Heart right ventricle (tissue), 16 donors: ENCODE measurements at regions of chr7 and their contacts with region 1.

Region 1: DNA sequence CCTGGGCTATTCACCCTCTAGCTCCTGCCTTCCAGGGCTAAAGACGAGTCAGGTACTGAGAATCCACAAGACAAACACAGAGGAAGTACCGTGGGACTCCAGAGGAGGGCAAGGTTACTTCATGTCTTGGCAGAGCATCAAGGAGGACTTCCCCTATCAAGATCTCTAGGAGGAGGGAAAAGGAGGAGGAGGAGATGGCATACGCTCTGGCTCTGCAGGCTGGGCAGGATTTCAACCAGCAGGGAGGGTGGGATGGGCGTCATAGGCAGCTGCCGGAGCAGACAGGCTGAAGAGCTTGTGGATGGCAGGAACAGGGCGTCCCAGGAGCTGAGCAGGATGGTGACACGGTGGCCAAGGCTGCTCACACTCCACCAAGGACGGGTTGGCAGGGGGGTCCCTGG is 21.3 kb downstream of the MDH2 start:
- DNase-seq: peak; percentile 38 to 73
- ATAC-seq: peak; percentile 67 to 94 (median 80)
- H3K4me3 ChIP-seq: no peak overlapping the region
- H3K27ac ChIP-seq: peak overlapping the region in 5 of 10 donors; percentile 35 to 56 (median 43)
- H3K4me1 ChIP-seq: peaks cover 0 to 32% (median 15%) of the 10 kb centered on the region in 9 donors
- H3K27me3 ChIP-seq: no peaks in the 10 kb centered on the region
- CTCF ChIP-seq: peak in 1 of 9 donors; percentile 6

Region 2: DNA sequence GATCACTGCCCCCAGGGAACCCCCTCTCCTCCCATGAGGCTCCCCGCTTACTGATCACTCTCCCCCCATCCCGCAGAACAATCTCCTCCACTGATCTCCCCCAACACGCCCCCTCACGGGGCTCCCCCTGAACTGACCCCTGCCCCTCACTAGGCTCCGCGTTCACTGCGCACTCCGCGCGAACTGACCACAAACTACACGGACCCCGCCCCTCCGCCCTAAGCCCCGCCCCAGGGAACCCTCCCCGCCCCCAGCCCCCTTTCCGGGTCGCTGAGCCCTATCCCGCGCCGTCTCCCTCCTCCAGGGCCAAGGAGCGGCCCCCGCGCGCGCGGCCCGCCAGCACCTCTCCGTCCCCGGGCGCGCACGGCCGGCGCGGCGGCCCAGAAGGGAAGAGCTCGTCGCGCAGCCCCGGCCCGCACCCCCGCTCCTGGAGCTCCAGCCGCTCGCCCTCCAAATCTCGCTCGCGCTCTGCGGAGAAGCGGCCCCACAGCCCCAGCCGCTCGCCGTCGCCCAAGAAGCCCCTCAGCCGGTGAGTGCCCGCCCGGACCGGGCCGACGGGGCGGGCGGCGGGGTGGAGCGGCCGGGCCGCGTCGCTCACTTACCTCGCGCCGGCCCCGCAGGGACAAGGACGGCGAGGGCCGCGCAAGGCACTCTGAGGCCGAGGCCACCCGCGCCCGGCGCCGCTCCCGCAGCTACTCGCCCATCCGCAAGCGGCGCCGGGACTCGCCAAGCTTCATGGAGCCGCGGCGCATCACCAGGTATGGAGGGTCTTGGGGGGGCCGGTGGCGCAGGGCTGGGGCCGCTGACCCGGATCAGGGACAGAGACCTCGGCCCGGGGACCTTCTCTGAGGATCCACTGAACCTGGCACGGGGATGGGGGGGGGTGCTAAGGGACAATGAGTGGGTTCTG is 213.4 kb after region 1 on chr7:
- intact Hi-C with region 1: loop called in 1 of 10 experiments (anchors 10 kb)
- DNase-seq: peak in 1 of 2 donors; percentile 59
- ATAC-seq: peak; percentile 18 to 75 (median 64)
- H3K4me3 ChIP-seq: peak overlapping the region in 9 of 10 donors; percentile 45 to 57 (median 47)
- H3K27ac ChIP-seq: peak overlapping the region in 1 of 10 donors; percentile 29
- H3K4me1 ChIP-seq: peaks cover 0 to 5% (median 0%) of the 10 kb centered on the region in 9 donors
- H3K27me3 ChIP-seq: peaks cover 3 to 65% (median 31%) of the 10 kb centered on the region in 7 donors
- CTCF ChIP-seq: no peak